GM13977 (cell line): ENCODE measurements at regions of chr16 and their contacts with region 1.

Region 1: GRCh38 chr16:72467157-72467759 is 295.3 kb upstream of the PMFBP1 start:
- DNase-seq: peak; percentile 23
- CTCF ChIP-seq: peak; percentile 64

Region 2: DNA sequence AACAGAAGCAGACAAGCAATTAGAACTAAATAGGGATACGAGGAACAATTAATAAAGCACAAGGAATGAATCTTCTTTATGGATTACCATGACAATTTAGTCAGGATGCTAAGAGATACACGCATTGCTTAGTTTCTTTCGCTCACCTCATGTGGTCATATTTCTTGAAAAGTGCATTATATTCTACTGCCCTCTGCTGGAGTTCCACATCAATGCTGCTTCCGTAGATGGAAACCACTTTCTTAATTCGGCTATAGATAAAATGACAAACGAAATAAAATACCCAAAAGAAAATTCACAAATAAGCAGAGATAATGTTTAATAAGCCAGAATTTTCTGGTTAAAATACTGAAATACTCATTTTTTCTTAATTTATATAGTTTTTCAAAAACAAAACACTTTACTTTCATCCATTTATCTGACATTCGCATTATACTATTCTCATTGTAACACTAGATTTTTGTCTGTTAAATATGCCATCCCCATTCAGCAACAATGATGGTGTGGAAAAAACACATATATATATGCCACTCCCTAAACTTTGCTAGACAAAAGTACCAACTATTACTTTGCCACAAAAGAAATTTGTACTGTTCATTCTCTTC is 720.7 kb before region 1 on chr16:
- in situ Hi-C with region 1: no loop called
- DNase-seq: peak; percentile 55
- CTCF ChIP-seq: peak; percentile 71

Region 3: GRCh38 chr16:72124761-72125634 is 342.3 kb before region 1 on chr16:
- in situ Hi-C with region 1: loop called (anchors 10 kb)
- DNase-seq: peak; percentile 73
- CTCF ChIP-seq: peak; percentile 90

Region 4: DNA sequence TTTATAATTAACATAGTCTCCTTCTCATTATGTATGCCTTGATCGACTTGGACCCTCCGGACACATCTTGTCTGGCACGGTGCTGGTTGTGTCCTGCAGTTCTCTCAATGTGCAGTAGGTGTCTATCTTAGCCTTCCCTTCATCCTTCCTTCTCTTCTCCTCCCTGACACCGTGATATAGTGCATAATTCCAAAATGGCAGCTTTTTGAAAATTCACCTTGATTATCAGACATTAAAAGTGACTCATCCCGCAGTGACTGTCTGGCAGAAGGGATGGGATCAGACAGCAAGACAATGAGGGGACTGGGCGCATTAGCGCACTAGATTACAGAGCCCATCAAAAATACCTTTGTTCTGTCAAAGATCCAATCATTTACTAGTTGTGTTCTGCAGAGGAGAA is 225.3 kb before region 1 on chr16:
- in situ Hi-C with region 1: loop called (anchors 10 kb)
- DNase-seq: peak; percentile 11
- CTCF ChIP-seq: peak; percentile 64